ENCODE measurements at regions of chr20 and their contacts with region 1.

Region 1: GRCh38 chr20:44217342-44218092 is 6.9 kb upstream of the OSER1 start:
- DNase-seq: peak; percentile 80
- ATAC-seq: peak; percentile 57
- H3K4me3 Mint-ChIP-seq: peak overlapping the region; percentile 62
- H3K27ac Mint-ChIP-seq: peak overlapping the region; percentile 86
- H3K4me1 Mint-ChIP-seq: peaks cover 54% of the 10 kb centered on the region
- H3K27me3 Mint-ChIP-seq: no peaks in the 10 kb centered on the region

Region 2: DNA sequence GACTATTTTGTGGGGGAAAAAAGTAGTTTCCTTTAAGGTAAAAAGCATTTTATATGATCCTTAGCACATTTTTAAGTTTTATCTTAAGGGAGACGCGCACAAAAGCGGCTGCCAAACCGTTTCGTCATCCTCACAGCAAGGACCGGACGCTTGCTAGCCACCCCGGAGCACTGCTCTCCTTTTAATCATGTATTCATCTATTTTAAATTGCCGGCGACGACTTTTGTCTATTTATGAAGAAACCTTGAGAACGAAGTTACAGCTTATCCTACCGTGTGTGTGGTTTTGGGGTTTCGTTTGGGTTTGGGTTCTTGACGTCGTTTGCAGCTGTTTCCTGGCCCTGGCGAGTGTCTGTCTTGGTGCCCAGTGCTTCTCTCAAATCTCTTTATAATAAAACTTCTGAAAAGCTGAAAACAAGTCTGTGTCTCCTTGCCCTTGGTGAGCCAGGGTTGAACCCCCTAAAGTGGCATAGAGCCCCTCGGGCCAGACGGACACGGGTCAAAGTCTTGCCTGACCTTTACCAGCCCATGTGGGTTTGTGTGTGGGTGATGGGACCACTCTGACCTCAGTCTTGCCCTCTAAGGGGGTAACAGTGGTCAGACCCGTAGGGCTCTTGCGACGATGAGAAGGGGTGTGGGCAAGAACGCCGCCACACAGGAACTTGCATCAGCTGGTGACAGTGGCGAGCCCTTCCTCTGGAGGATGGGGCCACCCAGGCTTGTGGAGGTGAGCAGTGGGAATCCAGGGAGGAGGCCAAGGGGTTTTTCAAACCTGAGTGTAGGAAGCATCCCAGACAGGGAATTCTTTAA is 148.1 kb before region 1 on chr20:
- CTCF ChIA-PET with region 1: no interaction called
- POLR2A ChIA-PET with region 1: no interaction called
- DNase-seq: peak; percentile 88
- ATAC-seq: peak; percentile 63
- H3K4me3 Mint-ChIP-seq: peak overlapping the region; percentile 72
- H3K27ac Mint-ChIP-seq: peak overlapping the region; percentile 93
- H3K4me1 Mint-ChIP-seq: peaks cover 74% of the 10 kb centered on the region
- H3K27me3 Mint-ChIP-seq: peaks cover 17% of the 10 kb centered on the region

Region 3: GRCh38 chr20:44143936-44144335 is 73.6 kb before region 1 on chr20:
- CTCF ChIA-PET with region 1: no interaction called
- POLR2A ChIA-PET with region 1: no interaction called
- DNase-seq: no peak
- ATAC-seq: no peak
- H3K4me3 Mint-ChIP-seq: no peak overlapping the region
- H3K27ac Mint-ChIP-seq: no peak overlapping the region
- H3K4me1 Mint-ChIP-seq: no peaks in the 10 kb centered on the region
- H3K27me3 Mint-ChIP-seq: peaks cover 15% of the 10 kb centered on the region

Region 4: GRCh38 chr20:44187051-44187762 is 30.3 kb before region 1 on chr20 and contains the start of gene JPH2:
- CTCF ChIA-PET with region 1: interaction called, 11 read pairs
- POLR2A ChIA-PET with region 1: no interaction called
- DNase-seq: no peak
- ATAC-seq: no peak
- H3K4me3 Mint-ChIP-seq: peak within 1 kb of the TSS; percentile 48
- H3K27ac Mint-ChIP-seq: no peak within 1 kb of the TSS
- H3K4me1 Mint-ChIP-seq: peaks cover 17% of the 10 kb centered on the region
- H3K27me3 Mint-ChIP-seq: peaks cover 50% of the 10 kb centered on the region
- total RNA-seq, gene JPH2: 0.10 TPM in 1 of 2 experiments, not detected in the other

Region 5: GRCh38 chr20:44228465-44229258 is 11.1 kb after region 1 on chr20:
- CTCF ChIA-PET with region 1: interaction called, 17 read pairs
- POLR2A ChIA-PET with region 1: no interaction called
- DNase-seq: no peak
- ATAC-seq: no peak
- H3K4me3 Mint-ChIP-seq: no peak overlapping the region
- H3K27ac Mint-ChIP-seq: peak overlapping the region; percentile 46
- H3K4me1 Mint-ChIP-seq: peaks cover 6% of the 10 kb centered on the region
- H3K27me3 Mint-ChIP-seq: no peaks in the 10 kb centered on the region

Region 6: GRCh38 chr20:44251284-44251683 is 33.8 kb after region 1 on chr20:
- CTCF ChIA-PET with region 1: no interaction called
- POLR2A ChIA-PET with region 1: no interaction called
- DNase-seq: no peak
- ATAC-seq: no peak
- H3K4me3 Mint-ChIP-seq: no peak overlapping the region
- H3K27ac Mint-ChIP-seq: no peak overlapping the region
- H3K4me1 Mint-ChIP-seq: no peaks in the 10 kb centered on the region
- H3K27me3 Mint-ChIP-seq: peaks cover 8% of the 10 kb centered on the region

Region 7: GRCh38 chr20:44288252-44288651 is 70.7 kb after region 1 on chr20:
- CTCF ChIA-PET with region 1: interaction called, 20 read pairs
- POLR2A ChIA-PET with region 1: no interaction called
- DNase-seq: peak; percentile 36
- ATAC-seq: peak; percentile 36
- H3K4me3 Mint-ChIP-seq: no peak overlapping the region
- H3K27ac Mint-ChIP-seq: no peak overlapping the region
- H3K4me1 Mint-ChIP-seq: no peaks in the 10 kb centered on the region
- H3K27me3 Mint-ChIP-seq: no peaks in the 10 kb centered on the region

Region 8: GRCh38 chr20:44326391-44327159 is 109.1 kb after region 1 on chr20:
- CTCF ChIA-PET with region 1: interaction called, 16 read pairs
- POLR2A ChIA-PET with region 1: no interaction called
- DNase-seq: no peak
- ATAC-seq: peak; percentile 57
- H3K4me3 Mint-ChIP-seq: no peak overlapping the region
- H3K27ac Mint-ChIP-seq: no peak overlapping the region
- H3K4me1 Mint-ChIP-seq: no peaks in the 10 kb centered on the region
- H3K27me3 Mint-ChIP-seq: peaks cover 3% of the 10 kb centered on the region

Region 9: GRCh38 chr20:44431502-44432234 is 214.2 kb after region 1 on chr20:
- CTCF ChIA-PET with region 1: no interaction called
- POLR2A ChIA-PET with region 1: no interaction called
- DNase-seq: no peak
- ATAC-seq: no peak
- H3K4me3 Mint-ChIP-seq: no peak overlapping the region
- H3K27ac Mint-ChIP-seq: no peak overlapping the region
- H3K4me1 Mint-ChIP-seq: no peaks in the 10 kb centered on the region
- H3K27me3 Mint-ChIP-seq: peaks cover 5% of the 10 kb centered on the region

Region 10: GRCh38 chr20:44598423-44599305 is 381.1 kb after region 1 on chr20:
- CTCF ChIA-PET with region 1: interaction called, 20 read pairs
- POLR2A ChIA-PET with region 1: no interaction called
- DNase-seq: peak; percentile 37
- ATAC-seq: peak; percentile 82
- H3K4me3 Mint-ChIP-seq: peak overlapping the region; percentile 69
- H3K27ac Mint-ChIP-seq: peak overlapping the region; percentile 86
- H3K4me1 Mint-ChIP-seq: peaks cover 31% of the 10 kb centered on the region
- H3K27me3 Mint-ChIP-seq: no peaks in the 10 kb centered on the region

Measured in activated CD8-positive, alpha-beta T cell treated with anti-CD3 and anti-CD28 coated beads, Interleukin-2, amount 10 ng/mL, durations not matched to agents 7 days and 5 days (primary cell).